SK-N-SH (cell line): ENCODE measurements at regions of chr10 and their contacts with region 1.

Region 1: DNA sequence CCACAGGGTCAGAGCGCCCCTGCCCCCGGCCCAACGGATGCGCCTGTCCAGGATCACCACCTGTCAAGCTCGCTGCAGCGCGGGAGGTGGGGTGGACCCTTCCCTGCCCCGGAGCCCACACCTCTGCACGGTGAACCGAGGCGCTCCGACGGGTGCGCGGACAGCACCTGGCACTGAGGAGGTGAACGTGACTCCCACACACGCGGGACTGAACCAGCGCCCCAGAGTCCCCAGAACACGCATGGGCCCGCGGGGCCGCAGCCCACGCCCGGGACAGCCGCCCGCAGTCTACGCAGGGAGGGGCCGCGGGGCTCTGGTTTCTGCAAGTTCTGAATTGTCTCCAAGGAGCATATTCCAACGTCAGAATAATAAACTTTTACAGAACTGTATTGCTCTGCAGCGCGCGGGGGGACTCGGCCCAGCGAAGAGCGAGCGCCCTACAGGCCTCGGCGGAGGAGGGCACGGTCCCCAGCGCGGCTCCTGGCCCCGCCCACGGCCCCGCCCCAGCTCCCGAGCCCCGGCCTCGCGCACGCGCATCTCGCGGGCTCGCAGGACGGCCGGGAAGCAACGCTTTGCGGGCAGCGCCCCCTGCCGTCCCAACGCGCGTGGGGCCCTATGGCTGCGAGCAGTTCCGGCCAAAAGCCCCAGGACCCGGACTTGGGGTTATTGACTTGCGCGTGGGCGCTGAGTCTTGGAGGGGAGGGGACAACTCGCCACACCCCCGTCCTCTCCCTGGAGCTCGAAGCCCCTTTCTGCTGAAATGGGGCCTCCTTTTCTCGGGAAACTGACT is 29.7 kb downstream of the OAT start:
- DNase-seq: peak; percentile 100
- H3K4me3 ChIP-seq: peak overlapping the region; percentile 54 to 65
- H3K27ac ChIP-seq: no peak overlapping the region
- H3K4me1 ChIP-seq: peaks cover 0 to 6% of the 10 kb centered on the region in 2 experiments; a peak in 1 of 4 replicates
- H3K27me3 ChIP-seq: no peaks in the 10 kb centered on the region
- CTCF ChIP-seq: peak; percentile 87
- EP300 ChIP-seq: no peak
- RAD21 ChIP-seq: peak; percentile 94

Region 2: GRCh38 chr10:123967396-123968243 is 421.4 kb before region 1 on chr10:
- CTCF ChIA-PET with region 1: interaction called, 10 read pairs
- POLR2A ChIA-PET with region 1: no interaction called
- DNase-seq: peak; percentile 91
- H3K4me3 ChIP-seq: peak overlapping the region in 1 of 2 experiments; percentile 31; a peak in 1 of 4 replicates
- H3K27ac ChIP-seq: no peak overlapping the region
- H3K4me1 ChIP-seq: peaks cover 0 to 5% of the 10 kb centered on the region in 2 experiments; a peak in 1 of 4 replicates
- H3K27me3 ChIP-seq: no peaks in the 10 kb centered on the region
- CTCF ChIP-seq: peak; percentile 49
- EP300 ChIP-seq: no peak
- RAD21 ChIP-seq: peak; percentile 93

Region 3: GRCh38 chr10:124077208-124077993 is 311.6 kb before region 1 on chr10:
- CTCF ChIA-PET with region 1: interaction called, 12 read pairs
- POLR2A ChIA-PET with region 1: no interaction called
- DNase-seq: peak; percentile 75
- H3K4me3 ChIP-seq: no peak overlapping the region
- H3K27ac ChIP-seq: peak overlapping the region in 1 of 2 experiments; percentile 56; a peak in 1 of 4 replicates
- H3K4me1 ChIP-seq: peaks cover 0 to 38% of the 10 kb centered on the region in 2 experiments; a peak in 2 of 4 replicates
- H3K27me3 ChIP-seq: no peaks in the 10 kb centered on the region
- CTCF ChIP-seq: no peak
- EP300 ChIP-seq: peak; percentile 26 to 96; a peak in 2 of 4 replicates
- RAD21 ChIP-seq: peak; percentile 26; the same call in 1 of the 2 replicates

Region 4: GRCh38 chr10:124221356-124222317 is 167.4 kb before region 1 on chr10:
- CTCF ChIA-PET with region 1: interaction called, 18 read pairs
- POLR2A ChIA-PET with region 1: no interaction called
- DNase-seq: peak; percentile 77
- H3K4me3 ChIP-seq: no peak overlapping the region
- H3K27ac ChIP-seq: no peak overlapping the region
- H3K4me1 ChIP-seq: peaks cover 0 to 26% of the 10 kb centered on the region in 2 experiments; a peak in 1 of 4 replicates
- H3K27me3 ChIP-seq: no peaks in the 10 kb centered on the region
- CTCF ChIP-seq: no peak
- EP300 ChIP-seq: 0 out of 4 replicates have a peak, but pooled peaks of 1 of the 2 experiments have one; percentile 24
- RAD21 ChIP-seq: no peak

Region 5: DNA sequence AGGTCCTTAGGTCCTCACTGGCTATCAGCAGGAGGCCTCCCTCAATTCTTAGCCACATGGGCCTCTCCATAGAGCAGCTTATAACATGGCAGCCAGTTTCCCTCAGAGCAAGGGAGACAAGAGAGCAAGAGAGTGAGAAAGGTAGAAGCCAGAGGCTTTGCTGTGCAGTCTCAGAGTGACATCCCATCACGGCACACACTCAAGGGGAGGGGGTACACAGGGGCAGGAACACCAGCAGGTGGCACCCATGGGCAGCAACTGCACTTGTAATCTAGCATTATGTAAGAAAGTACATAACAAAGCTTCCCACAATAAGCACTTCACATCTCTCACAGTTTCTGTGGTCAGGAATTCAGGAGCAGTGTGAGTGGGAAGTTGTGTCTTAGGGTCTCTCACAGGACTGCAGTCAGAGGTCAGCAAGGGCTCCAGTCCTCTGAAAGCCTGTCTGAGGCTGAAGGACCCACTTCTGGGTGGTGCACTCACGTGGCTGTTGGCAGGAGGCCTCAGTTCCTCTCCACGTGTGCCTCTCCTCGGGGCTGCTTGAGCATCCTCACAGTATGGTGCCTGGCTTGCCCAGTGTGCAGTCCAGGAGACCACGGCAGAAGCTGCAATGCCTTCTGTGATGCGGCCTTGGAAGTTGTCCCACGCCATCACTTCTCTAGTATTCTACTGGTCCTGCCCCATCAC is 129.7 kb before region 1 on chr10:
- CTCF ChIA-PET with region 1: interaction called, 47 read pairs
- POLR2A ChIA-PET with region 1: no interaction called
- DNase-seq: peak; percentile 51
- H3K4me3 ChIP-seq: no peak overlapping the region
- H3K27ac ChIP-seq: no peak overlapping the region
- H3K4me1 ChIP-seq: peaks cover 0 to 15% of the 10 kb centered on the region in 2 experiments; a peak in 1 of 4 replicates
- H3K27me3 ChIP-seq: no peaks in the 10 kb centered on the region
- CTCF ChIP-seq: no peak
- EP300 ChIP-seq: no peak
- RAD21 ChIP-seq: peak; percentile 63

Region 6: GRCh38 chr10:124345521-124345920 is 43.5 kb before region 1 on chr10:
- CTCF ChIA-PET with region 1: no interaction called
- POLR2A ChIA-PET with region 1: no interaction called
- DNase-seq: no peak
- H3K4me3 ChIP-seq: no peak overlapping the region
- H3K27ac ChIP-seq: no peak overlapping the region
- H3K4me1 ChIP-seq: no peaks in the 10 kb centered on the region
- H3K27me3 ChIP-seq: no peaks in the 10 kb centered on the region
- CTCF ChIP-seq: no peak
- EP300 ChIP-seq: no peak
- RAD21 ChIP-seq: no peak

Region 7: DNA sequence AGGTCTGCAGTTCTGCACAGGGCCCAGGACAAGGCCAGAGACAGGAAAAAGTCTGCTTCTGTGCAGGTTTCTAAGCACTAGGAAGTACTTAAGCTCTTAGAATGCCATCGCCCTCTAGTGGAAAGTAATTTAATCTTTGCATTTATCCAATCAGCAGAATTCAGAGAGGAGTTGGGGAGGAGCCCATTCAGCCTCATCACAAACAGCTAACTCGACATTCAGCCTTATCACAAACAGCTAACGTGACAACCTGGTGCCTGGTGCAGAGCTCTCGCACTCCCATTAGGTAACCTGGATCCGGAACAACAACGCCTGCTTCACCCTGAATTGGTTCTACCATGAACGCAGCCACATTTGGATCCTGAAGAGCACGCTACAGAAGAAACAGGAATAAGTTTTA is 14.5 kb after region 1 on chr10:
- CTCF ChIA-PET with region 1: interaction called, 37 read pairs
- POLR2A ChIA-PET with region 1: no interaction called
- DNase-seq: peak; percentile 72
- H3K4me3 ChIP-seq: no peak overlapping the region; a peak in 1 of 4 replicates
- H3K27ac ChIP-seq: no peak overlapping the region
- H3K4me1 ChIP-seq: peaks cover 0 to 2% of the 10 kb centered on the region in 2 experiments; a peak in 1 of 4 replicates
- H3K27me3 ChIP-seq: no peaks in the 10 kb centered on the region
- CTCF ChIP-seq: peak; percentile 72
- EP300 ChIP-seq: no peak; a peak in 1 of 4 replicates
- RAD21 ChIP-seq: peak; percentile 70